ENCODE measurements at regions of chr13 and their contacts with region 1.

Region 1: GRCh38 chr13:91133941-91134802 is 213.3 kb upstream of the MIR17HG start:
- DNase-seq: peak; percentile 24 to 57
- H3K4me3 ChIP-seq: no peak overlapping the region
- H3K27ac ChIP-seq: no peak overlapping the region
- H3K4me1 ChIP-seq: no peaks in the 10 kb centered on the region
- H3K27me3 ChIP-seq: no peaks in the 10 kb centered on the region
- CTCF ChIP-seq: peak; percentile 78

Region 2: GRCh38 chr13:91154558-91155353 is 20.6 kb after region 1 on chr13:
- CTCF ChIA-PET with region 1: no interaction called
- POLR2A ChIA-PET with region 1: no interaction called
- intact Hi-C with region 1: loop called (anchors 1 kb)
- DNase-seq: no peak
- H3K4me3 ChIP-seq: no peak overlapping the region
- H3K27ac ChIP-seq: no peak overlapping the region
- H3K4me1 ChIP-seq: peaks cover 18% of the 10 kb centered on the region
- H3K27me3 ChIP-seq: no peaks in the 10 kb centered on the region
- CTCF ChIP-seq: no peak

Region 3: DNA sequence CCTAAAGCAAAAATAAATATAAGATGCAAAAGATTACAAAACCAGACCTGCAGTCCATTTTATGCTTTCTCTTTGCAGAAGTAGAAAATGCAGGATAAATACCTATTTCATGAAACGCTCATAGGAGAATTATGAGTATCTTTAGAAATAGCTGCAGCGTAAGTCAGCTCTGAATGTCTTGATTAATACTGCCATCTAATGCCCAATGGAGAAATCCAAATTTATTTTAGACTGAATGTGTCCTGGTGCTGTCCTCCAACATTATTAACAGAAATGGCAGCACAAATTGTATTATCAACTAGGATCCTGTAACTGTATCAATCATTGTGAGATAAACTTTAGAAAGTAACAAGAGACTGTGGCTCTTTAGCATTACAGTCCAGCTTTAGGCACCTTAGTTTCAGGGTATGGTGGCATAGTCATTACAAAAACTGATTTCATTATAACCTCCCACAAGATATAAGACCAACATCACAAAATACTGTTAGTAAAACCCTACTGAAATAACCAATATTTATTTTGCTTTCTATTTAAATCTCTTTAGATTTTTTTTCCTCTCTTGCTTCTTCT is 51.2 kb after region 1 on chr13:
- CTCF ChIA-PET with region 1: no interaction called
- POLR2A ChIA-PET with region 1: no interaction called
- intact Hi-C with region 1: loop called (anchors 1 kb)
- DNase-seq: no peak
- H3K4me3 ChIP-seq: no peak overlapping the region
- H3K27ac ChIP-seq: no peak overlapping the region
- H3K4me1 ChIP-seq: no peaks in the 10 kb centered on the region
- H3K27me3 ChIP-seq: no peaks in the 10 kb centered on the region
- CTCF ChIP-seq: peak; percentile 51

Region 4: DNA sequence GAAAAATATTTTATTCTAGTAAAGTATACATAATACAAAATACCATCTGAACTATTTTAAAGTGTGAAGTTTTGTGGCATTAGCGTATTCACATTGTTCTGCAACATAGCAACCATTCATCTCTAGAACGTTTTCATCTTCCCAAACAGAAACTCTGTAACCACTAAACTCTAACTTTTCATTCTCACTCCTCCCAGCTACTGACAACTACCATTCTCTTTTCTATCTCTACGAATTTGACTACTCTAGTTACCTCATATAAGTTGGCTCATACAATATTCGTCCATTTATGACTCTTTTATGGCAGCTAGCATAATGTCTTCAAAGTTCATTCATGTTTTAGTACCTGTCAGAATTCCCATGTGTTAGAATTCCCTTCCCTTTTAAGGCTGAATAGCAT is 62.8 kb after region 1 on chr13:
- CTCF ChIA-PET with region 1: no interaction called
- POLR2A ChIA-PET with region 1: no interaction called
- intact Hi-C with region 1: no loop called
- DNase-seq: no peak
- H3K4me3 ChIP-seq: no peak overlapping the region
- H3K27ac ChIP-seq: no peak overlapping the region
- H3K4me1 ChIP-seq: no peaks in the 10 kb centered on the region
- H3K27me3 ChIP-seq: no peaks in the 10 kb centered on the region
- CTCF ChIP-seq: no peak

Region 5: DNA sequence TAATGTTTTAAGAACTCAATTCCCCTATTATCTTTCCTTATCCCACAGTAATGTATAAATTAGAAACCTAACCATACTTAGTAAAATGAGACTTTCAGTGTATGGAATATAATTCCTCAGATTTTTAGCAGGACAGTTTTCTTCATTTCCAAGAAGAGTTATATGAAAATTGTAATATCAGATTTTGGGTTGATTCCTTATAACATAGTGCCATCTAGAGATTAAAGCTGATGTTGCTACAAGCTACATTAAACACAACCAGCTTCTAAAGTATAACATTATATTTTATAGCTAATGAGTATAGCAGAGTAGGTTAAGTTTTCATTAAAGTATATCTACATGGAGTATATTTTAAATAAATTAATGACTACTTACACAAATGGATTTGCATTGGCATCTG is 113.6 kb after region 1 on chr13:
- CTCF ChIA-PET with region 1: no interaction called
- POLR2A ChIA-PET with region 1: no interaction called
- intact Hi-C with region 1: loop called (anchors 1 kb)
- DNase-seq: no peak
- H3K4me3 ChIP-seq: no peak overlapping the region
- H3K27ac ChIP-seq: no peak overlapping the region
- H3K4me1 ChIP-seq: no peaks in the 10 kb centered on the region
- H3K27me3 ChIP-seq: no peaks in the 10 kb centered on the region
- CTCF ChIP-seq: peak; percentile 48

Region 6: DNA sequence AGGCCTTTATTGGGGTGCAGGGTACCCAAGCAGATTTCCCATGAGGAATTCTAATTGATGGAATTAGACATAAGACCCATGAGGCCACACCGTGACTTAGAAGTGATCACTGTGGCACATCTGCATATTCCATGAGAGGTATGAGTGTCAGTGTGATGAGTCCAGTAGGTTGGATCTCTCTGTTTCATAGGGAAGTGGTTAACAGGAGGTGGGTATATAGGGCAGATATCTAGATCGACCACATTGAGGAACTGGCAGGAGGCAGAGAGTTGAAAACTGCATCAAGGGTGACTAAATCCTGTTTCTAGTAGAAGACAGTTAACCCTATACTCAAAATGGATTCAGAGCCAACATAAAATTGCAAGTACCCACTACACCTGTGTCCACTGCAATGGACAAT is 144.7 kb after region 1 on chr13:
- CTCF ChIA-PET with region 1: no interaction called
- POLR2A ChIA-PET with region 1: no interaction called
- intact Hi-C with region 1: no loop called
- DNase-seq: no peak
- H3K4me3 ChIP-seq: no peak overlapping the region
- H3K27ac ChIP-seq: no peak overlapping the region
- H3K4me1 ChIP-seq: no peaks in the 10 kb centered on the region
- H3K27me3 ChIP-seq: no peaks in the 10 kb centered on the region
- CTCF ChIP-seq: no peak

Region 7: GRCh38 chr13:91348906-91349435 is 214.8 kb after region 1 on chr13:
- CTCF ChIA-PET with region 1: no interaction called
- POLR2A ChIA-PET with region 1: no interaction called
- intact Hi-C with region 1: loop called (anchors 10 kb)
- DNase-seq: peak; percentile 66 to 89
- H3K4me3 ChIP-seq: peak overlapping the region; percentile 99
- H3K27ac ChIP-seq: peak overlapping the region; percentile 81
- H3K4me1 ChIP-seq: peaks cover 20% of the 10 kb centered on the region
- H3K27me3 ChIP-seq: no peaks in the 10 kb centered on the region
- CTCF ChIP-seq: peak; percentile 82

Region 8: GRCh38 chr13:91406619-91407018 is 272.4 kb after region 1 on chr13:
- CTCF ChIA-PET with region 1: no interaction called
- POLR2A ChIA-PET with region 1: no interaction called
- intact Hi-C with region 1: loop called (anchors 5 kb)
- DNase-seq: peak in 1 of 2 experiments; percentile 39
- H3K4me3 ChIP-seq: no peak overlapping the region
- H3K27ac ChIP-seq: no peak overlapping the region
- H3K4me1 ChIP-seq: no peaks in the 10 kb centered on the region
- H3K27me3 ChIP-seq: 0 out of 2 replicates have a peak, but pooled peaks cover 4% of the 10 kb centered on the region
- CTCF ChIP-seq: peak; percentile 64

Region 9: GRCh38 chr13:91722267-91722884 is 588.2 kb after region 1 on chr13:
- CTCF ChIA-PET with region 1: no interaction called
- POLR2A ChIA-PET with region 1: no interaction called
- intact Hi-C with region 1: loop called (anchors 1 kb)
- DNase-seq: no peak
- H3K4me3 ChIP-seq: no peak overlapping the region
- H3K27ac ChIP-seq: no peak overlapping the region
- H3K4me1 ChIP-seq: no peaks in the 10 kb centered on the region
- H3K27me3 ChIP-seq: no peaks in the 10 kb centered on the region
- CTCF ChIP-seq: peak; percentile 76

Region 10: DNA sequence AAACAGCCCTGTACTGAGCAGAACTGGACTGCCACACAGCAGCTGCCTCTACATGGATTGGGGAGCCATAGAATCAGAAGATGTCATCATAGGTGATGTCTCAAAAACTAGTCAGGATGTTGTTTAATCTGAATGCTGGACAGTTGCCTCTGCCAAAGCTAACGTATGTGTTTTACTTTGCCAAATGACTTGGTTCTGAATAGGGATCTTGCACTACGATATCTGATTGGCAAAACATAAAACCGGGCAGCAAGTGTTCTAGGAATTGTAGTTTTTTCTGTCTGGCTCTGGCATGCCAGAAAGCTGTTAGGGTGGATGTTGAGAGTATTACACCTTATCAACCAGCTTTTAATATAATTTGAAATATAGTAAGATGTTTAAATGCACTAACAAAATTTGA is 910.2 kb after region 1 on chr13:
- CTCF ChIA-PET with region 1: no interaction called
- POLR2A ChIA-PET with region 1: no interaction called
- intact Hi-C with region 1: no loop called
- DNase-seq: no peak
- H3K4me3 ChIP-seq: no peak overlapping the region
- H3K27ac ChIP-seq: no peak overlapping the region
- H3K4me1 ChIP-seq: no peaks in the 10 kb centered on the region
- H3K27me3 ChIP-seq: no peaks in the 10 kb centered on the region
- CTCF ChIP-seq: no peak